ENCODE measurements at regions of chr16 and their contacts with region 1.

Region 1: GRCh38 chr16:68756250-68756915 is 19.3 kb downstream of the CDH1 start:
- DNase-seq: peak; percentile 97
- H3K4me3 Mint-ChIP-seq: peak overlapping the region; percentile 47
- H3K27ac Mint-ChIP-seq: peak overlapping the region; percentile 96
- H3K4me1 Mint-ChIP-seq: peaks cover 44% of the 10 kb centered on the region
- H3K27me3 Mint-ChIP-seq: no peaks in the 10 kb centered on the region
- CTCF ChIP-seq: no peak

Region 2: GRCh38 chr16:68470461-68471150 is 285.8 kb before region 1 on chr16:
- CTCF ChIA-PET with region 1: no interaction called
- POLR2A ChIA-PET with region 1: no interaction called
- intact Hi-C with region 1: no loop called
- DNase-seq: no peak
- H3K4me3 Mint-ChIP-seq: no peak overlapping the region
- H3K27ac Mint-ChIP-seq: no peak overlapping the region
- H3K4me1 Mint-ChIP-seq: no peaks in the 10 kb centered on the region
- H3K27me3 Mint-ChIP-seq: peaks cover 42% of the 10 kb centered on the region
- CTCF ChIP-seq: no peak

Region 3: GRCh38 chr16:68668266-68668665 is 88.1 kb before region 1 on chr16:
- CTCF ChIA-PET with region 1: no interaction called
- POLR2A ChIA-PET with region 1: interaction called, 10 read pairs
- intact Hi-C with region 1: no loop called
- DNase-seq: peak; percentile 95
- H3K4me3 Mint-ChIP-seq: peak overlapping the region; percentile 48
- H3K27ac Mint-ChIP-seq: peak overlapping the region; percentile 92
- H3K4me1 Mint-ChIP-seq: peaks cover 36% of the 10 kb centered on the region
- H3K27me3 Mint-ChIP-seq: no peaks in the 10 kb centered on the region
- CTCF ChIP-seq: no peak

Region 4: GRCh38 chr16:68737046-68737729 is 19.2 kb before region 1 on chr16 and contains the start of gene CDH1:
- CTCF ChIA-PET with region 1: interaction called, 5 read pairs
- POLR2A ChIA-PET with region 1: interaction called, 40 read pairs
- intact Hi-C with region 1: no loop called
- DNase-seq: peak; percentile 84
- H3K4me3 Mint-ChIP-seq: peak within 1 kb of the TSS; percentile 79
- H3K27ac Mint-ChIP-seq: peak within 1 kb of the TSS; percentile 69
- H3K4me1 Mint-ChIP-seq: peaks cover 27% of the 10 kb centered on the region
- H3K27me3 Mint-ChIP-seq: no peaks in the 10 kb centered on the region
- CTCF ChIP-seq: no peak
- total RNA-seq, gene CDH1: 37.6 and 37.7 TPM in 2 replicates

Region 5: DNA sequence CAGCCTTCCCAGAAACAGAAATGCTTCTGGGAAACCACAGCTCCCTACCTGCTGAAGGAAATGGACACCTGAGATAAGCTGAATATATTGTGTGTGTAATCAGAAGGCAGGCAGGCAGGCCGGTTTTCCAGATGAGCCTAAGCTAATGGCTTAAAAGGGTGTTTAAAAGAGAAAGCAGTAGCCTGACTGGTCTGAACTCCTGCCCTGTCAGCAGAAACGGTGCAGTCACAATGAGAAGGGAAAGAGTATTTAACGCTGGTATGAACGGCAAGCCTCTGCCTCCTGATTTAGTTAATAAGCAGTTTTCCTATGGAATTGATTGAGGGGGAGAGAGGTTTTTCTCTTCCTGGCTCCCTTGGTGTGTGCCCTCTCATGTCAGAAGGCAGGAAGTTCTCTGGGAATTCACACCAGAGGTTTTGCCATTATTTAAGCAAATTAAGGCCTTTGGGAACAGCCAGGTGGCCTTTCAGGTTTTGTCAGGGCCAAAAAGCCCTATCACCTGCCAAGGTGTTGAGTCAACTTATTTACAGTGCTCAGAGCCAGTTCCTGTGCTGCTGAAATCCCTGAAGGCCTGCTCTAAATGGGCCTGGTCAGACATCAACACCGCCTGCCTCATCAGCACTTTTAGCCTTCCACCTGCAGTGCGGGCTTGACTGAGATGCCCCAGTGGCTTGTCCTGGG is 22.3 kb after region 1 on chr16:
- CTCF ChIA-PET with region 1: interaction called, 3 read pairs
- POLR2A ChIA-PET with region 1: interaction called, 16 read pairs
- intact Hi-C with region 1: no loop called
- DNase-seq: peak; percentile 44
- H3K4me3 Mint-ChIP-seq: no peak overlapping the region
- H3K27ac Mint-ChIP-seq: peak overlapping the region; percentile 89
- H3K4me1 Mint-ChIP-seq: peaks cover 5% of the 10 kb centered on the region
- H3K27me3 Mint-ChIP-seq: no peaks in the 10 kb centered on the region
- CTCF ChIP-seq: no peak

Region 6: DNA sequence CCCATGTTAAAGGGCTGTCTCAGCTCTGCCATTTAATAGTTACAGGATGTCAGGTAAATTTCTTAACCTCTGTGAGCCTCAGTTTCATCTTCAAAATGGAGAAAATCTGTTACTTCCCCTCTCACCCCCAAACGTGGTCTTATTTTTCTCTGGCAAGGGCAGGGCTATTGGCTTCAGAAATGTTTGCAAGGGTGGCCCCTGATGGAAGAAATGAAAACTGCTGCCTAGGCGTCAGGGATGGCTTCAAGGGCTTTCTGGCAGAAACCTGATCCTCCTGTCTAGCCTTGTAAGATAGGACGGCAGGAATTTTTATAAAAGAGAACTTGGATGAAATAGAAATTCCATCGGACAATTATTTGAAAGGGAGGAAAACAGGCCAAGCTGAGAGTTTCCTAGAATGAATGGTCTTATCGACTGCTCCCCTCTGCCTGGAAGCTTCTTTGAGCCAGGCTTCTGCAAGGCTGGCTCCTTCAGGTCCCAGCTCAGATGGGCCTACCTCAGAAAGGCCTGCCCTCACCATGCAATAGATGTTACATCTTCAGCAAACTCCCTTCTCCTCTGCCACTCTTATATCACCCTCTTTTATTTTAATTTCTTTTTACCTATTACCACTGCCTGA is 44.0 kb after region 1 on chr16:
- CTCF ChIA-PET with region 1: interaction called, 7 read pairs
- POLR2A ChIA-PET with region 1: interaction called, 15 read pairs
- intact Hi-C with region 1: no loop called
- DNase-seq: peak; percentile 83
- H3K4me3 Mint-ChIP-seq: no peak overlapping the region
- H3K27ac Mint-ChIP-seq: no peak overlapping the region
- H3K4me1 Mint-ChIP-seq: peaks cover 21% of the 10 kb centered on the region
- H3K27me3 Mint-ChIP-seq: no peaks in the 10 kb centered on the region
- CTCF ChIP-seq: peak; percentile 73